ENCODE measurements at regions of chr1 and their contacts with region 1.

Region 1: DNA sequence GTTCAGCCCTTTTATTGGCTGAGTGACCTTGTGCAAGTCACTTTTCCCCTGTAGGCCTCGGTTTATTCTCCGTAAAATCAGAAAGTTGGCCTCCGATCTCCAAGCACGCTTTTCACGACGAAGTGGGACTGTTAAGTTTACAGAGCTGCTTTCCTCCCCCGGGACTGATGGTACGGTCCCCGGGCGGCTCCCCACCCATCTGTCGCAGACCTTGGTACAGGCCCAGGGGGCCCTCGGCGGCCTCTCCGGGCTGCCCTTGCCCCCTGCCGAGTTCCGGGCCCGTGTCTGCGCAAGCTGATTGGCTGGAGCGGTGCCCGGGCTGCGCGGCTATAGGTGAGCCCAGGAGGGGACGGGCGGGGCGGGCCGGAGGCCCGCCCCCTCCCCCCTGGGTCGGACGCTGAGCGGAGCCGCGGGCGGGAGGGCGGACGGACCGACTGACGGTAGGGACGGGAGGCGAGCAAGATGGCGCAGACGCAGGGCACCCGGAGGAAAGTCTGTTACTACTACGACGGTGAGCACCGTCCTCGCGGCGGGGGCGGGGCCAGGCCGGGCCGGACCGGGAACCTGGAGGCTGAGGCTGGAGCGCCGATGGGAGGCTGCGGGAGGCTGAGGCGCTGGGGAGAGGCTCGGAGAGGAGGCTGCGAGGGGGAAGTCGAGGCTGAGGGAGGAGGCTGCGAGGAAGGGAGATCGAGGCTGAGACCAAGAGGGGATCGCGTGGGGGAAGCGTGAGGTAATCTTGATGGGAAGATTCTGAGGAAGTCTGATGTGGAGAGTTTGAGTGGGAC is at the start of gene HDAC1:
- DNase-seq: peak; percentile 98
- ATAC-seq: peak; percentile 99
- H3K4me3 Mint-ChIP-seq: peak within 1 kb of the TSS; percentile 99
- H3K27ac Mint-ChIP-seq: peak within 1 kb of the TSS; percentile 98
- H3K4me1 Mint-ChIP-seq: peaks cover 49% of the 10 kb centered on the region
- H3K27me3 Mint-ChIP-seq: no peaks in the 10 kb centered on the region
- total RNA-seq, gene HDAC1: 183 to 189 TPM

Region 2: DNA sequence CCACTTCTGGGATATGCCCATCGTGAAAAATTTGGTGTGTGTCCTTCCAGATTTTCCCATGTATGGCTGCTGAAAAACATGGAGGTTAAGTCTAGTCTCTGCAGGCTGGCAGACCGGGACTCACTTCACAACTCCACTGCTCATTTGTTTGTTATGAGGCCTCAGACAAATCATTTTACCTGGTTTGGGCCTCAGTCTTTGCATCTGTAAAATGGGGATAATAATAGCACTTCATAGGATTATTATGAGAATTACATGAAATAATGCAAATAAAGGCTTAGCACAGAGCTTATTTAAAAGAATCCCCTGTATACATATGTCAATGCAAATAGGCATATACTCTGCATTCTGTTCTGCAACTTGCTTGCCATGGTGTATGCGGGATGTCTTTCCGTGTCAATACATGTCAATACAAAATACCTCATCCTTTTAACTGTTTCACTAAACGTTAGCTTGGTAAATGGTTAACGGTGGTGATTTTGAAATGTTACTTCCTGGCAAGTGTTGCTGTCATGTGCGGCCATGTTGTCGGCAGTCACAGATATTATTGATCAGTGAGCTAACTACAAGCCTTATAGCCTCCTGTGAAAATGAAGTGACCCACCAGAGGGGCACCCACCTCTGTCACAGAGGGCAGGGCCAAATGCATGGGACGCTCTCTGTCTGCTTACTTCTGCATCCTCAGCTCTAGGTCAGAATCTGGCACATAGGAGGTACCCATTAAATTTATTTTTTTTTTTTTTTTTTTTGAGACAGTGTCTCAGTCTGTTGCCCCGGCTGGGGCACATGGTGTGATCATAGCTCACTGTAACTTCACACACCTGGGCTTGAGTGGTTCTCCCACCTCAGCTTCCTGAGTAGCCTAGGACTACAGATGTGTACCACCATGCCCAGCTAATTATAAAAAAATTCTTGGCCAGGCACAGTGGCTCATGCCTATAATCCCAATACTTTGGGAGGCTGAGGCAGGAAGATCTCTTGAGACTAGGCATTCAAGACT is 36.5 kb before region 1 on chr1:
- CTCF ChIA-PET with region 1: interaction called, 15 read pairs
- DNase-seq: peak; percentile 70
- ATAC-seq: peak; percentile 20
- H3K4me3 Mint-ChIP-seq: peak overlapping the region; percentile 97
- H3K27ac Mint-ChIP-seq: peak overlapping the region; percentile 94
- H3K4me1 Mint-ChIP-seq: peaks cover 45% of the 10 kb centered on the region
- H3K27me3 Mint-ChIP-seq: no peaks in the 10 kb centered on the region